Uterus (tissue), 4 donors: ENCODE measurements at regions of chr9 and their contacts with region 1.

Region 1: DNA sequence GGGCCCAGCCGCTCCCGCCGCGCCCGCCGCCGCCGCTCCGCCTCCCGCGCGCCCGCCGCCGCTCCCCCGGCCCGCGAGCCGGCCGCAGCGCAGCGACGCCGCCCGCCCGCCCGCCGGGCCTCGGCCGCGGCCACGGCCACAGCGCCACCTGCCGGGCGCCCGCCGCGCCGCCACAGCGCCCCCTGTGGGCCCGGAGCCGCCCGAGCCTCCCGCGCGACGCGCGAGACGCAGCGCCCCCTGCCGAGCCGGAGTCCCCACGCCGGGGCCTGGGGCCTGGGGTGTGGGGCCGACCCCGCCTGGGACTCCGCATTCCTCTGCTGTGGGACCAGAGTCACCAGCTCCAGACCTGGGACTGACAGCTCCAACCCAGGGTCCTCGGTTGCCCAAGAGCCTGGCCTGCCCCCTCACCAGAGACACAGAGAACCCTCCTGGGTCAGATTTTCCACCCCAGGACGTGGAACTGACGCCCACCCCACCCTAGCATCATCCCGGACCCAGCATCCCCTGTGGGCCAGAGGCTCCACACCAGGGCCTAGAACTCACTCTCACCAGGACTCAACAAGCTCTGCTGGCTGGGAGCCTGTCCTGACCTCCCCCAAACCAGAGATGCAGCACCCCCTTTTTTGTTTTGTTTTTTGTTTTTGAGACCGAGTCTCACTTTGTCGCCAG is at the start of gene RAPGEF1:
- DNase-seq: peak; percentile 54 to 76
- H3K4me3 ChIP-seq: peak within 1 kb of the TSS; percentile 53 to 63
- H3K27ac ChIP-seq: peak within 1 kb of the TSS; percentile 75 to 98
- H3K4me1 ChIP-seq: peaks cover 5 to 8% of the 10 kb centered on the region in 2 donors
- H3K27me3 ChIP-seq: no peaks in the 10 kb centered on the region
- CTCF ChIP-seq: peak; percentile 61 to 100 (median 98)
- POLR2A ChIP-seq: no peak
- total RNA-seq, gene RAPGEF1: 13.1 to 73.7 (median 26.2) TPM

Region 2: DNA sequence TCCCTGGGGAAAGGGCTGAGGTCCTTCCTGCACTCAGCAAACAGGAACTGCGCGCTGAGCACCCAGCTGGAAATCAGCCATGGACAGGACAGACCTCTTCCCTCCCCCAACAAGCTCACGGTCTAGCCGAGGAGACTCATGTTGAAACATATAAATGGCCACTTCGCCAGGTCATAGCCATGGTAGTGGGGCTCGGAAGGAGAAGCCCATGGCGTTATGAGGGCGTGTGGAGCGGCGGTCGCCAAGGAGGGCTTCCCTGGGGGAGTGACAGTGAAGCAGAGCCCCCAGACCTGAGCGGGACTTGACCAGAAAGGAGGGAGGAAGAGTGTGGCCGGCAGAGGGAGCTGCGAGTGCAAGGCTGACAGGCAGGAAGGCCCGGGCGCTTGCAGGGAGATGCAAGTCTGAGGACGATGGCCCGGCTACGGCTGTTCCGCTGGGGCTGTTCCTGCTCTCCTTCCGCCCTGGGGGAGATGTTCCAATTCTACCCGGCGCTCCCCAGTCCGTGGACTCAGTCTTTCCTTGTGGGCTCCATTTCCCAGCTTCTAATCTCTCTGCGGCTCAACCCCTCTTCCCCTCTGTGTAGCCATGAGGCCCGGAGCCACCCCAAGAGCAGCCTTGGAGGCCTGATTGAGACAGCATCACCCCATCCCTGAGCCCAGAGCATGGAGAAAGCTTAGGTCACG is 390.1 kb before region 1 on chr9:
- intact Hi-C with region 1: loop called (anchors 5 kb)
- DNase-seq: peak; percentile 85 to 88
- H3K4me3 ChIP-seq: no peak overlapping the region
- H3K27ac ChIP-seq: no peak overlapping the region
- H3K4me1 ChIP-seq: no peaks in the 10 kb centered on the region
- H3K27me3 ChIP-seq: no peaks in the 10 kb centered on the region
- CTCF ChIP-seq: peak; percentile 85 to 92 (median 88)
- POLR2A ChIP-seq: peak in 1 of 2 donors; percentile 22

Region 3: DNA sequence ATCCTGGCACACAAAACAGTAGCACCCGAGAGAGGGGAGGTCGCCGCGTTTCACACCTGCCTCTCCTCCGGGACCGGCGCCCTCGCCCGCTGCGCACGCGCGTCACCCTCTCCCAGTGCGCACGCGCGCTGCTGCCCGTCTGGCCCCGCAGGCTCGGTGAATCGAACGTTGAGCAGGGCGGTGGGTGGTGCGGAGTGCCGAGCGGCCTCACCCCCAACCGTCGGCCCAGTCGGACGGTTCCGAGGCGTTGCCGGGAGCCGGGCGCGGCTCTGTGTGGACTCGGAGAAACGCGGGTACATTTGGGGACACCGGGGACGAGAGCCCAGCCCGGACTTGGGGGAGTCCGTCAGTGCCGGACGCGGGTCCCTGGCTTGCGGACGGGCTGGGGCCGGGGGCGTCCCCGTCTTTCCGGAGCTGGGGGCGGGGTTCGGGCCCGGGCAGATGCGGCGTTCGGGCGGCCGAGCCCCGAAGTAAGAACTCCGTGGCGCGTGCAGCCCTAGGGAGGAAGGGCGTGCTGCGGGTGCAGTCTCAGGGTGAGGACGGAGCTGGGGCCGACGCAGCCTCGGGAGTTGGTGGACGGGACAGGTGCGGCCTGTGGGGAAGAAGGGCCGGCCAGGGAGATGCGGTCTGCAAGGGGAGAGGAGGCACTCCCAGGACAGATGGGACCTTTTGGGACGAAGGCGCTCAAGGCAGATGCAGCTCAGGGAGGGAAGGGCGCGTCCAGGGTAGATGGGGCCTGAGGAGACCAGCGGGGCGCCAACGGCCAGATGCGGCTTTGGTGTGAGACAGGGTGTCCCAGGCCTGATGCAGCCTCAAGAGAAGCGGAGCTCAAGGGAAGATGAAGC is 237.1 kb before region 1 on chr9 and contains the start of gene POMT1:
- intact Hi-C with region 1: no loop called
- DNase-seq: peak; percentile 81 to 87
- H3K4me3 ChIP-seq: peak within 1 kb of the TSS; percentile 82 to 84
- H3K27ac ChIP-seq: peak within 1 kb of the TSS; percentile 62 to 69
- H3K4me1 ChIP-seq: no peaks in the 10 kb centered on the region
- H3K27me3 ChIP-seq: no peaks in the 10 kb centered on the region
- CTCF ChIP-seq: peak in 1 of 4 experiments; percentile 26
- POLR2A ChIP-seq: peak in 1 of 2 donors; percentile 51
- total RNA-seq, gene POMT1: 0.29 to 40.2 (median 18.5) TPM

Region 4: DNA sequence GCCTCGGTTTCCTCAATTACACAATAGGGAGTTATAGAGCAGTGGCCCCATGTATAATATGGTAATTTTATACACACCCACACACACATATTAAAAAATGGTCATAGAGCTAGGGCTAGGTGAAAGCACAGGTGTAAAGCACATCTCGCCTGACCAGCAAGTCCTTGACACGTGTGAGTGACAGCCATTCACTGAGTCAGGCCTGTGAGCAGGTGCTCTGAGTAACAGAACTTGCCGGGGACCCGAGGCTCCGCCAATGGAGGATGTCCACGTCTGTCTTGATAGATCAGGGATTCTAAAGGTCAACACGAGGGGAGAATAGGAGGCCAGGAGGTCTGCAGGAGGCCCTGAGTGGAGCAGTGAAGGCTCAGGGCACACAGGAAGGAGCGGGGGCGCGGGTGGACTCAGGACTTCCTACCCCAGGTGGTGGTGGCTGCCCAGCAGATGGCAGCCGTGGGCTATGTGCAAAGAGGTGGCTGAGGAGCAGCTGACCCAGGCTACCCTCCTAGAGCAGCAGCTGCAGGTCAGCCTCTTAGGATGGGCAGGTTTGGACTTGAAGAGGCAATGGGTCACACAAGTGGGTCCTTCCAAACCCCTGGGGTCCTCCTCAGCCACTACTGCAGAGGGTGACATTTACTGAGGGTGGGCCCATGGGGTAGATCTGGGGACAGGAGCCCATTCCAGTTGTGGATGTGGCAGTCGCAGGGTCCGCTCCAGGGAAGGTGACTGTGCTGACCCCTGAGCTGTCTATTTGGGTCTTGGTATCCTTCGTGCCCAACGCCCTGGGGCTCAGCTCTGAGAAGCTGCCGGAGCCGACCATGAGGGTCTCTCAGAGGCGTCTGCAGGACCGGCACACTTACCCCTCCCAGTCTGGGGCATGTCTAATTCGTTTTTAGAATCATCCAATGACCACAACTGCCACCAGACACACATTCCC is 148.9 kb before region 1 on chr9:
- intact Hi-C with region 1: loop called (anchors 2 kb)
- DNase-seq: peak; percentile 76 to 80
- H3K4me3 ChIP-seq: no peak overlapping the region
- H3K27ac ChIP-seq: no peak overlapping the region
- H3K4me1 ChIP-seq: no peaks in the 10 kb centered on the region
- H3K27me3 ChIP-seq: no peaks in the 10 kb centered on the region
- CTCF ChIP-seq: peak; percentile 77 to 95 (median 86)
- POLR2A ChIP-seq: no peak

Region 5: GRCh38 chr9:131773911-131774379 is 33.8 kb after region 1 on chr9:
- intact Hi-C with region 1: no loop called
- DNase-seq: peak in 1 of 2 donors; percentile 18
- H3K4me3 ChIP-seq: no peak overlapping the region
- H3K27ac ChIP-seq: no peak overlapping the region
- H3K4me1 ChIP-seq: no peaks in the 10 kb centered on the region
- H3K27me3 ChIP-seq: no peaks in the 10 kb centered on the region
- CTCF ChIP-seq: no peak
- POLR2A ChIP-seq: no peak